Activated naive CD4-positive, alpha-beta T cell treated with anti-CD3 and anti-CD28 coated beads, Interleukin-2, amount 10 ng/mL, durations not matched to agents 7 days and 5 days (primary cell): ENCODE measurements at regions of chr18 and their contacts with region 1.

Region 1: GRCh38 chr18:74353169-74353775 is 37.6 kb downstream of the C18orf63 start:
- DNase-seq: peak; percentile 74
- H3K4me3 Mint-ChIP-seq: no peak overlapping the region
- H3K27ac Mint-ChIP-seq: no peak overlapping the region
- H3K4me1 Mint-ChIP-seq: peaks cover 46% of the 10 kb centered on the region
- H3K27me3 Mint-ChIP-seq: peaks cover 12% of the 10 kb centered on the region

Region 2: DNA sequence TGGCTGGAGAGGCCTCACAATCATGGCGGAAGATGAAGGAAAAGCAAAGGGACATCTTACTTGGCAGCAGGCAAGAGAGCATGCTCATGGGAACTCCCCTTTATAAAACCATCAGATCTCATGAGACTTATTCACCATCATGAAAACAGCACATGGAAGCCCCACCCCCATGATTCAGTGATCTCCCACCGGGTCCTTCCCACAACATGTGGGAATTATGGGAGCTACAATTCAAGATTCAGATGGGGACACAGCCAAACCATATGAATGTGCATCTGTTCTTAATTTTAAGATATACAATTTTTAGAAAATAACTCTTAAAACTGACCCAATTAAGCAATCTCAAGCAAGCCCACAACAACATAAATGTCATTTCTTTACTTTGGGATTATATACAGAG is 25.1 kb before region 1 on chr18:
- CTCF ChIA-PET with region 1: no interaction called
- DNase-seq: no peak
- H3K4me3 Mint-ChIP-seq: no peak overlapping the region
- H3K27ac Mint-ChIP-seq: no peak overlapping the region
- H3K4me1 Mint-ChIP-seq: no peaks in the 10 kb centered on the region
- H3K27me3 Mint-ChIP-seq: no peaks in the 10 kb centered on the region

Region 3: DNA sequence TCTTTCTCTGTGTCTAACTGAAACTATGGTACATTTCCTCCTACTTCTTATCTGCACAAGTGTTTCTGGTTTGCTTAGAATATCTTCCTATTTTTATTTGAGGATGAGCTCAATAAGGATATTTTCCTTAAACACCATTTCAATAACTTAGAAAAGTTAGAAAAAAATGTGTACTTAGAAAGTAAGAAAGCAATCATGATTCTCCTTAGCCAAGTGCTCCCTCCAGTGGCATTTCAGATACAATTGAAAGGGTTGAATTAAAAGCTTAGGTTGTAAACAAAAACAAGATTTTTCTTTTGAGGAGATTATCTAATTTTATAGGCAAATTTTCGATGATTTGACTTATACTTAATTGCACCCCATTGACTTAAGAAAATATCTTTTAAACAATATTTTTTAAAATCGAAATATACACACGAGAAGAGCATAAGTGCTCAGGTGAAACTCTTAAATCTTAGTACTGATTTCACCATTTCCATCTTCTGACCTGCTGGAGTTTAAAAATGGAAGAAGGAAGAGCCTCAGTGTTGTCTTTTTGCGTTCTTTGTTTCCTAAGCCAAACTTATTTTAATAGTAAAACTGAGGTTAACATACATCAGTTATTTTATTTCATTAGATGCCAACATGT is 10.7 kb before region 1 on chr18:
- CTCF ChIA-PET with region 1: interaction called, 11 read pairs
- DNase-seq: peak; percentile 47
- H3K4me3 Mint-ChIP-seq: no peak overlapping the region
- H3K27ac Mint-ChIP-seq: no peak overlapping the region
- H3K4me1 Mint-ChIP-seq: no peaks in the 10 kb centered on the region
- H3K27me3 Mint-ChIP-seq: peaks cover 12% of the 10 kb centered on the region

Region 4: GRCh38 chr18:74378179-74378682 is 25.0 kb after region 1 on chr18:
- CTCF ChIA-PET with region 1: interaction called, 10 read pairs
- DNase-seq: peak; percentile 66
- H3K4me3 Mint-ChIP-seq: peak overlapping the region; percentile 41
- H3K27ac Mint-ChIP-seq: peak overlapping the region; percentile 95
- H3K4me1 Mint-ChIP-seq: peaks cover 64% of the 10 kb centered on the region
- H3K27me3 Mint-ChIP-seq: peaks cover 16% of the 10 kb centered on the region

Region 5: DNA sequence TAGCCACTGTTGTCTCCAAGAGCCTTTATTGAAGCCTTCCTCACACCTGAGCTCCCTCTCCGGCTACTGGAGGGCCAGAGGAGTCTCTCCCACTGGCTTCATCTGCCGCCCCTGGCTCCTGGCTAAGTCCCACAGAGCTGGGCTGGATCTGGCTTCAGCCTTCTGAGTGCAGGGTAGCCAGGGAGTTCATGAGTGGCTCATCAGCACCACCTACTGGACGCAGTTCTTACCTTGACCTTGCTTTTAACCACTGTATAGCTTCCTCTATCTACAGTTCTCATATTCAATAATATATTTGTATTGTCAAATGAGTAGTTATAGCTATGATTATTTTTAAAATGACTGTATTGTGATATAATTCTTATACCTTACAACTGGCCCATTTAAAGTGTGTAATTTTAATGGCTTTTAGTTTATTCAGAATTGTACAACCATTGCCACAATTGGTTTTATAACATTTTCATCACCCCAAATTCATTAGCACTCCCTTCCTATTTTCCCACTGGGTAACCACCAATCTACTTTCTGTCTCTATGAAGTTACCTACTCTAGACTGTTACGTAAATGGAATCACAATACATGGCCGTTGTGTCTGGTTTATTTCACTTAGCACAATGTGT is 198.8 kb after region 1 on chr18:
- CTCF ChIA-PET with region 1: interaction called, 53 read pairs
- DNase-seq: peak; percentile 87
- H3K4me3 Mint-ChIP-seq: no peak overlapping the region
- H3K27ac Mint-ChIP-seq: no peak overlapping the region
- H3K4me1 Mint-ChIP-seq: no peaks in the 10 kb centered on the region
- H3K27me3 Mint-ChIP-seq: peaks cover 30% of the 10 kb centered on the region